BJ (cell line): ENCODE measurements at regions of chr2 and their contacts with region 1.

Region 1: GRCh38 chr2:201231781-201232466 is 28.4 kb upstream of the CASP8 start:
- DNase-seq: peak; percentile 62
- H3K4me3 ChIP-seq: no peak overlapping the region
- H3K27me3 ChIP-seq: no peaks in the 10 kb centered on the region
- CTCF ChIP-seq: peak; percentile 95

Region 2: GRCh38 chr2:200913654-200914053 is 318.3 kb before region 1 on chr2:
- CTCF ChIA-PET with region 1: interaction called, 12 read pairs
- POLR2A ChIA-PET with region 1: no interaction called
- DNase-seq: peak; percentile 45
- H3K4me3 ChIP-seq: no peak overlapping the region
- H3K27me3 ChIP-seq: no peaks in the 10 kb centered on the region
- CTCF ChIP-seq: no peak

Region 3: DNA sequence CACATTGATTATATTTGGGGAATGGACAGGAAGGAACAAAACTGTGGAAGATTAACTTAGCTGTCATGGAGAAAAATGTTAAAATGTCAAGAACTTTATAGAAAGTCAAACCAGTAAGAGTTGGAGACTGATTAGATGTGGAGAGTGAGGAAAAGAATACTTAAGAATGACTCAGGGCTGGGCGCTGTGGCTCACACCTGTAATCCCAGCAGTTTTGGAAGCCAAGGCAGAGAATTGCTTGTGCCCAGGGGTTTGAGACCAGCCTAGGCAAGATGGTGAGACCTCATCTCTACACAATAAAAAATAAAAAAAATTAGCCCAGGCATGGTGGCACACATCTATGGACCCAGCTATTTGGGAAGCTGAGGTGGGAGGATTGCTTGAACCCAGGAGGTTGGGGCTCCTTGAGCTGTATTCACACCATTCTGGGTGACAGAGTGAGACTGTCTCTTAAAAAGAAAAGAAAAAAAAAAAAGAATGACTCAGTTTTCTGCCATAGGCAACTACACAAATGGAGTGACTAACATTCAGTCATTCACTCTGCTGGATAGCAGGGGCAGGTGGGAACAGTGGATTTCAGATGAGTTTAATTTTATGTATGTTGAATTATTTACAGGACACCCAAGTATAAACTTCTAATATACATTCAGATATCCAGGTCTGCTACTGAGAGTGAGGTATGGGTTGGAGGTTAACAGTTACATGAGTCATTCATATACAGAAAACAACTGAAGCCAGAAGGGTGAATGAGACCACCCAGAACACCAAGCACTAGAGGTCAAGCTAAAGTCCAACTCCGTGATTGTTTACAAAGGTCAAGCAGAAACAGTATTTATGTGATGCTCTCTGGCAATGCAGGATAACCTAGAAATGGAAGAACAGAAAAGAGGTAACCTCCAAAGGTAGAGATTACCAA is 302.3 kb before region 1 on chr2:
- CTCF ChIA-PET with region 1: no interaction called
- POLR2A ChIA-PET with region 1: interaction called, 16 read pairs
- DNase-seq: no peak
- H3K4me3 ChIP-seq: no peak overlapping the region
- H3K27me3 ChIP-seq: no peaks in the 10 kb centered on the region
- CTCF ChIP-seq: no peak

Region 4: GRCh38 chr2:201074996-201075395 is 156.9 kb before region 1 on chr2:
- CTCF ChIA-PET with region 1: no interaction called
- POLR2A ChIA-PET with region 1: no interaction called
- DNase-seq: no peak
- H3K4me3 ChIP-seq: no peak overlapping the region
- H3K27me3 ChIP-seq: no peaks in the 10 kb centered on the region
- CTCF ChIP-seq: no peak

Region 5: GRCh38 chr2:201182650-201183364 is 49.1 kb before region 1 on chr2 and contains the start of gene CASP10:
- CTCF ChIA-PET with region 1: interaction called, 22 read pairs
- POLR2A ChIA-PET with region 1: no interaction called
- DNase-seq: no peak
- H3K4me3 ChIP-seq: peak within 1 kb of the TSS; percentile 29
- H3K27me3 ChIP-seq: no peaks in the 10 kb centered on the region
- CTCF ChIP-seq: no peak
- polyA plus RNA-seq, gene CASP10: 0.83 and 1.0 TPM in 2 replicates

Region 6: DNA sequence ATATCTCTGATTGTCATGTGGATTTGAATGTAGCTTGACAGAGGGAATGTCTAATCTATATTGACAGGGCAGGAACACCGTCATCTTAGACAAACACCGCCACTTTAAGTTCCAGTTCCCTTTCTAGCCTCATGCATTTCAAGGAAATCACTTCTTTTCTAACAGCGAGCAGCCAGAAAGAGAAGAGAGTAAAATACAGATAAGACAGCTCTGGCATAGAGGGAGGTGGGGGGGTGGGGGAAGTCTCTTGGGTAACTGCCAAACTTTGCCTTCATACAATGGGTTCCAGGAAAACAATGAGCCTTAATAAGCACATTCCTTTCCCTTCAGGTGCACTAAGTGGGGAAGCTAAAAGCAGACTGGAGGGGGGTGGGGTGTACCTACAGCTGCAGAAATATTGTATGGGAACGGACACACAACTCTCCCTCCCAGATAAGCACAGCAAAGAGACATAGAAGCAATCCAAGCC is 11.8 kb before region 1 on chr2:
- CTCF ChIA-PET with region 1: interaction called, 32 read pairs
- POLR2A ChIA-PET with region 1: interaction called, 8 read pairs
- DNase-seq: no peak
- H3K4me3 ChIP-seq: no peak overlapping the region
- H3K27me3 ChIP-seq: no peaks in the 10 kb centered on the region
- CTCF ChIP-seq: no peak